Activated CD4-positive, alpha-beta T cell treated with anti-CD3 and anti-CD28 coated beads, Interleukin-2, amount 10 ng/mL, durations not matched to agents 24 days and 14 days (primary cell): ENCODE measurements at regions of chr16 and their contacts with region 1.

Region 1: DNA sequence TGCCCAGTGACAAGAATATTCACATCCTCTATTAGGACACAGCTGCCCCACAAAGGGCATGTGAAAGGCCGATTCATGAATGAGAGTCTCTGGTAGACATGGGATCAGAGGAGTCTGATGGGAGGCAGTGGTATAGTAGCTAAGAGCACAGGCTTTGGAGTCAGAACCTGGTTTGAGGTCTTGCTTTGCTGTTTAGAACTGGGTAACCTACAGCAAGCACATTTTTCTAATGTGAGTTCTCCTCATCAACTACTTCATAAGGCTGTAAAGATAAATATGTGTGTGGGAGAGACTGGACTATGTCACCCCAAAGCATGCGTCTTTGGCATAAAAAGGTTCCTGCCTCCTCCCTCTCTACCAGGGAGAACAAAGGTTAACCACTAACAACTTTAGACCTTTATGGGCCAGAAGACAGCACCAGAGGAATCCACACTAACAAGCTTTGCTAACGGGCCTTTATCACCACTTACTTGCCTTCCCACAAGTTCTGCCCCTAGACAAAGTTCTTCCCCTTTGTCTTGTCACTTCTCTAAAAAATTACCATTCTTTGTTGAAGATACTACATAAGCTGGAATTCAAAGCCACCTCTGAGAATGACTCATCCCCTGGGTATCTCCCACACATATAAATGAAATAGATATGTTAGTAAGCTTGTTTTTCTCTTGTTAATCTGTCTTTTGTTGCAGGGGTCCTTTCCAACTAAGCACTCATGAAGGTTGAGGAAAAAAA is 21.1 kb downstream of the CDR2 start:
- DNase-seq: peak; percentile 75
- H3K4me3 Mint-ChIP-seq: peak overlapping the region; percentile 49
- H3K27ac Mint-ChIP-seq: peak overlapping the region; percentile 95
- H3K4me1 Mint-ChIP-seq: peaks cover 43% of the 10 kb centered on the region
- H3K27me3 Mint-ChIP-seq: no peaks in the 10 kb centered on the region

Region 2: DNA sequence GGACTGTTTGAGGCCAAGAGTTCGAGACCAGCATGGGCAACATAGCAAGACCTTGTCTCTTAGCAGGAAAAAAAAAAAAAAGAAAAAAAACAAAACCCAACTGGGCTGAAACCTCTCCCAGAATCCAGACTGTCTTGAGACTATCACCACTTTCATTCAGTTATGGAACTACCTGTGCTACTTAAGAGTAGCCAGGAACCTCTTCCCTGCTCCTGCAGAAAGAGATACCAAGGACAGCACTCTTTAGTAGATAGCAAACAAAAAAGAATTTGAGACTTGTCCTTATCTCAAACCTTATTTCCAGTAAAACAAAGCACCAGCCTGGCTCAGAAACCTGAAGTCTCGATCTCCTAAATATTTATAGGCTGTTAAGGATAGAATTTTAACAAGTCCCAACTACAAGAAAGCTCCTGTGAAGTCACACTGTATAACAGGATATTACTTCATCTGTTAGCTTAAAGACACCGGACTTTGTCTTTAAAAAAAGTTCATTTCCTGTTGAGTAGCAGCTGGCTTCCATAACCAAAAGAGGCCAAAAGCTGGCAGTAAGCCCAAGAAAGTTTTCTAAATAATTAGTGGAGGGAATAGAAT is 16.0 kb after region 1 on chr16:
- intact Hi-C with region 1: loop called (anchors 1 kb)
- DNase-seq: no peak
- H3K4me3 Mint-ChIP-seq: peak overlapping the region; percentile 35
- H3K27ac Mint-ChIP-seq: peak overlapping the region; percentile 29
- H3K4me1 Mint-ChIP-seq: peaks cover 69% of the 10 kb centered on the region
- H3K27me3 Mint-ChIP-seq: no peaks in the 10 kb centered on the region